ENCODE measurements at regions of chr2 and their contacts with region 1.

Region 1: GRCh38 chr2:85538486-85539360 is at the start of gene MAT2A:
- DNase-seq: peak; percentile 88 to 91
- ATAC-seq: peak; percentile 79 to 88 (median 80)
- H3K4me3 ChIP-seq: peak within 1 kb of the TSS; percentile 90
- H3K4me3 Mint-ChIP-seq: peak within 1 kb of the TSS; percentile 95
- H3K27ac ChIP-seq: peak within 1 kb of the TSS; percentile 94
- H3K27ac Mint-ChIP-seq: peak within 1 kb of the TSS; percentile 89 to 90
- H3K4me1 ChIP-seq: peaks cover 23% of the 10 kb centered on the region
- H3K4me1 Mint-ChIP-seq: peaks cover 33 to 47% of the 10 kb centered on the region in 2 donors
- H3K27me3 ChIP-seq: no peaks in the 10 kb centered on the region
- H3K27me3 Mint-ChIP-seq: no peaks in the 10 kb centered on the region
- CTCF ChIP-seq: peak; percentile 15
- total RNA-seq, gene MAT2A: 116 to 141 (median 135) TPM

Region 2: GRCh38 chr2:85409845-85410583 is 128.7 kb before region 1 on chr2 and contains the start of gene CAPG:
- intact Hi-C with region 1: loop called (anchors 5 kb)
- DNase-seq: peak in 1 of 2 donors; percentile 42
- ATAC-seq: peak in 1 of 3 donors; percentile 41
- H3K4me3 ChIP-seq: peak within 1 kb of the TSS; percentile 50
- H3K4me3 Mint-ChIP-seq: peak within 1 kb of the TSS; percentile 67
- H3K27ac ChIP-seq: peak within 1 kb of the TSS; percentile 59
- H3K27ac Mint-ChIP-seq: peak within 1 kb of the TSS in 1 of 2 donors; percentile 70
- H3K4me1 ChIP-seq: peaks cover 84% of the 10 kb centered on the region
- H3K4me1 Mint-ChIP-seq: peaks cover 58 to 62% of the 10 kb centered on the region in 2 donors
- H3K27me3 ChIP-seq: no peaks in the 10 kb centered on the region
- H3K27me3 Mint-ChIP-seq: peaks cover 0 to 14% of the 10 kb centered on the region in 2 donors
- CTCF ChIP-seq: no peak
- total RNA-seq, gene CAPG: 10.6 to 50.3 (median 19.3) TPM

Region 3: DNA sequence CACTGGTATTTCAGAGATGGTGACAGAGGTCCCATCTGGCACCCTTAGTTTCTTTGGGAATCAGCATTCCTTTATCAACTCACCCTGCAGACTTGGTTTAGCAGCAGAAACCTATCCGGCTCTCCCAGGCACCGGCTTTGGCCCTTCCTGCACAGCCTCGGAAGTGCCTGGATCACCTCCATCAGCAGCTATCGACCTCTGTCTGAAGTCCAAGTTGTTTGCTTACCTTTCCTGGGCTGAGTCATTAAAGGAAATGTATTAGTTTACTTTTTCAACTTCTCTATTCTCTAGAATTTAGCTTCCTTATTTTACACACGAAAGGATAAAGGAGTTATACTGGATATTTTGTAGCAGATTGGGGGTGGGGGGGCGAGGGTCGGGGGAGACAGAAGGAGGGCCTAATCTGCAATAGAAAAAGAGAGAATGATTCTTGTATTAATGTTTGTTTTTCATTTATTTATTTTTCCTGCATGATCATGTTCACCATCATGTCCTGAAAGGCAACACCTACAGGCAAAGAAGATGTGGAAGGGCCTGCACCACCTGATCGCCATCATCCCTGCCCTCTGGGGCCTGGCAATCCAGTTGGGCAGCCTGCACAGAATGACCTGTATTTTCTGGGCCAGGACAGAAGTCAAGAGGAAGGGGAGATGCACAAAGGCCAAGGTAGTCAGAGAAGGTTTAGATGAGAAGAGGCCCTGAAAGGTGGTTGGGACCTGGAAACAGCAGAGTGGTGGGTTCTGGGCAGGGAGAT is 21.9 kb before region 1 on chr2:
- intact Hi-C with region 1: no loop called
- DNase-seq: no peak
- ATAC-seq: no peak
- H3K4me3 ChIP-seq: no peak overlapping the region
- H3K4me3 Mint-ChIP-seq: no peak overlapping the region
- H3K27ac ChIP-seq: no peak overlapping the region
- H3K27ac Mint-ChIP-seq: no peak overlapping the region
- H3K4me1 ChIP-seq: no peaks in the 10 kb centered on the region
- H3K4me1 Mint-ChIP-seq: no peaks in the 10 kb centered on the region
- H3K27me3 ChIP-seq: no peaks in the 10 kb centered on the region
- H3K27me3 Mint-ChIP-seq: no peaks in the 10 kb centered on the region
- CTCF ChIP-seq: no peak

Region 4: DNA sequence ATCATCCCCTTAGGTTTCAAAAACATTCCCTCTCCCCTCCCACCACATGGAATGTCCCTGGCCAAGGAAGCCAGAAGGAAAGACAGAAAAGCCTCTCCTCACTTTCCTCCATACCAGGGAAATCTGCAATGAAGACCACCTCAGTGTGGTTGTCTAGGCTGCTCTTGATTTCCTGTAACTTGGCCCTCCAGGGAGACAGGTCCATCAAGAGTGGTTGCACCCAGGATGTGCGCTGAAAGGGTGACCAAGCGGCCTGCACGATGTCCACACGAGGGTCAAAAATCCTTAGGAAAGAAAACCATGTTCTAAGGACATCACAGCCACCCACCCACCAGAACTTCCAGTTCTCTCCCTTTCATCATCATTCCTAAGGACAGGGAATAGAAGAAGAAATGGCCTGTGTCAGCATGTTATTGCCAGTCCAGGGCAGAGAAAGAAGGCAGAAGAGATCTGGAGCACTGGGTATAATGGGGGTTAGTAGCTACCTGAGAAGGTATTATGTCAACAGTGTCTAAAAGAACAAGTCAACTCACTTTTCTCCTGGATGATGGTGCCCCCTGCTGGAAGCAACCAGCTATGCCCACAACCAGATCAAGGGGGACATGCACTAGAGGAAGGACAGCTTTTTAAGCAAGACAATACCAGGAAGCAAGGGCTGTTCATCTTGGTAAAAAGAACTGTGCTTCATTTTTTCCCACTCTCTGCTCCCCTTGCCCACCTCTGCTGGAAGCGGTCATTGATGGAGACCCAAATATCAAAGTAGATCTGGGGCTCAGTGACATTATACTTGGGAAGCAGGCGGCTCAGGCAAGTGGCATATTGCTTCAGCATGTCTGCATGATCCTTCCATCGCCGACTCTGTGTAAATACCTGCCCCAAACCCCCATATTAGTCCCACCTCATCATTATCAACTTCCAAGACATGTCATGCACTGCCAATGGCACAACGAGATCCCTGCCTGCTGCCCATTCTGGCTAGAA is 13.3 kb after region 1 on chr2:
- intact Hi-C with region 1: no loop called
- DNase-seq: peak; percentile 81 to 94
- ATAC-seq: peak; percentile 91 to 99 (median 95)
- H3K4me3 ChIP-seq: no peak overlapping the region
- H3K4me3 Mint-ChIP-seq: no peak overlapping the region
- H3K27ac ChIP-seq: no peak overlapping the region
- H3K27ac Mint-ChIP-seq: peak overlapping the region in 1 of 2 donors; percentile 29
- H3K4me1 ChIP-seq: no peaks in the 10 kb centered on the region
- H3K4me1 Mint-ChIP-seq: peaks cover 0 to 9% of the 10 kb centered on the region in 2 donors
- H3K27me3 ChIP-seq: no peaks in the 10 kb centered on the region
- H3K27me3 Mint-ChIP-seq: no peaks in the 10 kb centered on the region
- CTCF ChIP-seq: peak; percentile 88

Measured in natural killer cell (primary cell).